ENCODE measurements at regions of chr16 and their contacts with region 1.

Region 1: GRCh38 chr16:85554112-85554813 is 58.9 kb upstream of the GSE1 start:
- DNase-seq: peak; percentile 91
- H3K4me3 Mint-ChIP-seq: peak overlapping the region; percentile 91
- H3K27ac Mint-ChIP-seq: peak overlapping the region; percentile 73
- H3K4me1 Mint-ChIP-seq: peaks cover 12% of the 10 kb centered on the region
- H3K27me3 Mint-ChIP-seq: no peaks in the 10 kb centered on the region
- CTCF ChIP-seq: no peak

Region 2: GRCh38 chr16:85393674-85394483 is 160.4 kb before region 1 on chr16:
- CTCF ChIA-PET with region 1: interaction called, 7 read pairs
- POLR2A ChIA-PET with region 1: interaction called, 15 read pairs
- intact Hi-C with region 1: loop called (anchors 10 kb)
- DNase-seq: no peak
- H3K4me3 Mint-ChIP-seq: no peak overlapping the region
- H3K27ac Mint-ChIP-seq: no peak overlapping the region
- H3K4me1 Mint-ChIP-seq: peaks cover 47% of the 10 kb centered on the region
- H3K27me3 Mint-ChIP-seq: no peaks in the 10 kb centered on the region
- CTCF ChIP-seq: peak; percentile 44

Region 3: GRCh38 chr16:85491058-85491771 is 63.0 kb before region 1 on chr16:
- CTCF ChIA-PET with region 1: interaction called, 4 read pairs
- POLR2A ChIA-PET with region 1: interaction called, 3 read pairs
- intact Hi-C with region 1: loop called (anchors 2 kb)
- DNase-seq: peak; percentile 27
- H3K4me3 Mint-ChIP-seq: no peak overlapping the region
- H3K27ac Mint-ChIP-seq: no peak overlapping the region
- H3K4me1 Mint-ChIP-seq: peaks cover 10% of the 10 kb centered on the region
- H3K27me3 Mint-ChIP-seq: no peaks in the 10 kb centered on the region
- CTCF ChIP-seq: peak; percentile 69

Region 4: DNA sequence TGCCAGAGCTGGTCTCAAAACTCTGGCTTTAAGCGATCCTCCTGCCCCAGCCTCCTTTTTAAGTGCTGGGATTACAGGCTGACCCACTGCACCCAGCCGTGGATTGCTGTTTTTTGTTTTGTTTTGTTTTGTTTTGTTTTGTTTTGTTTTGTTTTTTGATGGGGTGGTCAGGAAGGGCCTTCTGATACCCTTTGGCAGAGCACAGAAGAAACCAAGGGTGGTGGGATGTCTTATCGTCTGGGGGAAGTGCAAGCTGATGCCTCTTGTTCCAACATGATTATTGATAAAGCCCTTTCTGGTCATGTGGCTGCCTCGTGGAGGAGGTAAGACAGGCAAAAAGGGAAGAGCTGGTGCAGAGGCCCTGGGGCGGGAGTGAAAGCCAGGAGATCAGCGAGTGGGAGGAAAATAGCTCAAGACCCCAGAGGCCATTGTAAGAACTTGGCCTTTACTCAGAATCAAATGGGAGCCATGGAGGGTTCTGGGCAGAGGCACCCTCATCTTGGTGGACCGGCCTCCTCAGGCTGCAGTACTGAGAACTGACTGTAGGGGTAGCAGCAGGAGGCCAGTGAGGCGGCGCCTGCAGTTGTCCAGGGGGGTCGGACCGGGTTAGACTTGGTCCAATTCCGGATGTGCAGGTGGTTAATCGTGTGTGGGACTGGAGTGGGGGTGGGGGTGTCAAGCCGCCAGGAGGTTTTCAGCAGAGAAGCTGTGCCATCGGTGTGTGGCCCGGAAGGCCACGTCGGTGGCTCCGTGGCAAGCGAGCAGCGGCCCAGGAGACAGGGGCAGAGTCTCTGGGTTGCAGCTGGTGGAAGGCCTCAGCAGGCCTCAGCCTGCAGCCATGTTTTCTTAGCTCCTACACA is 25.5 kb before region 1 on chr16:
- CTCF ChIA-PET with region 1: interaction called, 6 read pairs
- POLR2A ChIA-PET with region 1: interaction called, 5 read pairs
- intact Hi-C with region 1: loop called (anchors 1 kb)
- DNase-seq: no peak
- H3K4me3 Mint-ChIP-seq: no peak overlapping the region
- H3K27ac Mint-ChIP-seq: no peak overlapping the region
- H3K4me1 Mint-ChIP-seq: peaks cover 7% of the 10 kb centered on the region
- H3K27me3 Mint-ChIP-seq: no peaks in the 10 kb centered on the region
- CTCF ChIP-seq: peak; percentile 22